ENCODE measurements at regions of chr19 and their contacts with region 1.

Region 1: DNA sequence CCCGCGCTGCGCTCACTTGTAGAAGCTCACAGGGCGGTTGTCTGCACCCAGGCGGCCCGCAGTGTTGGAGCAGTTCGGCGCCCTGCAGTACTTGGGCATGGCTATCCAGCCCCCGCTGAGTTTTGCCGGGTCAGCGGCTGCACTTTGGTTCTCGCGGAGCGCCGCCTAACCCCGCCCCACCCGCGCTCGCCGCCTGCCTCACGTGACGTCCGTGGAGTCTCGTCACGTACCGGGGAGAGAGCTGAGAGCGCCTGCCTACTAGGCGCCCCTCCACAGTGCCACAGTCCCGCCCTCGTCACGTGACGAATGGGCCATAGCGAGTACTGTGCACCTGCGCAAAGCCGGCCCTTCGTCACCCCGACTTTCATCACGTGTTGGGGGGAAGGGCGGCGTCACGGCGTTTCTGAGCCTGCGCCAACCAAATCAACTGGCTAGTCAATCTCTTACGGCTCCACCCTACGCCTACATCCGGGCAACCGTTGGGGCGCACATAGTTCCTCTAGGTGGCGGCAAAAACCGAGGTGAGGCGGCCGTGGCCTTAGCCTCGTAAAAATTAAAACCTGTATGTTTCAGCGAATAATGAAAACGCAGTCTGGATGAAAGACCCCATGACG is at the start of gene THAP8:
- DNase-seq: peak; percentile 100
- ATAC-seq: peak; percentile 96 to 98 (median 97)
- H3K4me3 ChIP-seq: peak within 1 kb of the TSS; percentile 43 to 75 (median 66)
- H3K27ac ChIP-seq: peak within 1 kb of the TSS; percentile 86 to 97 (median 92)
- H3K4me1 ChIP-seq: peaks cover 3 to 21% (median 16%) of the 10 kb centered on the region in 9 donors
- H3K27me3 ChIP-seq: no peaks in the 10 kb centered on the region
- CTCF ChIP-seq: peak in 8 of 9 donors; percentile 33 to 84 (median 56)
- total RNA-seq, gene THAP8: 2.7 to 7.7 (median 3.5) TPM

Region 2: DNA sequence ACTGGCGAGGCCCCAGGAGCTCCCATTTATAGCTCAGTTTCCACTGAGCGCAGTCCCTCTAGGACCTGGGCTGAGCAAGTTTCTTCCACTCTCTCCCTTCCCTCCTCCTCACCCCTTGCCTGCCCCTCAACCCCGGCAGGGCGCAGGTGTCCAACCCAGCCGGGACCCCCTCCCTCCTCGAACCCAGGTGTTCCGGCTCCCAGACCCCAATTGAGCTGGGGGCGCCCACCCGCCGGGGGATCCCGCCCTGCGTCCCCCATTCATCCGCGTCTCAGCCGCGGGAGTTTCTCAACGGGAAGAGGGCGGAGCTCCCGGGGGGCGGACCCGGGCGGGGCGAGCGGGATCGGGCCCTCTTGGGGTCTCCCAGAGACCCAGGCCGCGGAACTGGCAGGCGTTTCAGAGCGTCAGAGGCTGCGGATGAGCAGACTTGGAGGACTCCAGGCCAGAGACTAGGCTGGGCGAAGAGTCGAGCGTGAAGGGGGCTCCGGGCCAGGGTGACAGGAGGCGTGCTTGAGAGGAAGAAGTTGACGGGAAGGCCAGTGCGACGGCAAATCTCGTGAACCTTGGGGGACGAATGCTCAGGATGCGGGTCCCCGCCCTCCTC is 197.6 kb before region 1 on chr19 and contains the start of gene KIRREL2:
- intact Hi-C with region 1: no loop called
- DNase-seq: no peak
- ATAC-seq: peak in 5 of 8 donors; percentile 16 to 47 (median 34)
- H3K4me3 ChIP-seq: peak within 1 kb of the TSS; percentile 1 to 63 (median 52)
- H3K27ac ChIP-seq: no peak within 1 kb of the TSS
- H3K4me1 ChIP-seq: peaks cover 0 to 29% (median 12%) of the 10 kb centered on the region in 9 donors
- H3K27me3 ChIP-seq: peaks cover 20 to 98% (median 93%) of the 10 kb centered on the region in 7 donors
- CTCF ChIP-seq: no peak
- total RNA-seq, gene KIRREL2: 0.12 to 0.35 TPM in 2 of 10 donors, not detected in the others

Region 3: DNA sequence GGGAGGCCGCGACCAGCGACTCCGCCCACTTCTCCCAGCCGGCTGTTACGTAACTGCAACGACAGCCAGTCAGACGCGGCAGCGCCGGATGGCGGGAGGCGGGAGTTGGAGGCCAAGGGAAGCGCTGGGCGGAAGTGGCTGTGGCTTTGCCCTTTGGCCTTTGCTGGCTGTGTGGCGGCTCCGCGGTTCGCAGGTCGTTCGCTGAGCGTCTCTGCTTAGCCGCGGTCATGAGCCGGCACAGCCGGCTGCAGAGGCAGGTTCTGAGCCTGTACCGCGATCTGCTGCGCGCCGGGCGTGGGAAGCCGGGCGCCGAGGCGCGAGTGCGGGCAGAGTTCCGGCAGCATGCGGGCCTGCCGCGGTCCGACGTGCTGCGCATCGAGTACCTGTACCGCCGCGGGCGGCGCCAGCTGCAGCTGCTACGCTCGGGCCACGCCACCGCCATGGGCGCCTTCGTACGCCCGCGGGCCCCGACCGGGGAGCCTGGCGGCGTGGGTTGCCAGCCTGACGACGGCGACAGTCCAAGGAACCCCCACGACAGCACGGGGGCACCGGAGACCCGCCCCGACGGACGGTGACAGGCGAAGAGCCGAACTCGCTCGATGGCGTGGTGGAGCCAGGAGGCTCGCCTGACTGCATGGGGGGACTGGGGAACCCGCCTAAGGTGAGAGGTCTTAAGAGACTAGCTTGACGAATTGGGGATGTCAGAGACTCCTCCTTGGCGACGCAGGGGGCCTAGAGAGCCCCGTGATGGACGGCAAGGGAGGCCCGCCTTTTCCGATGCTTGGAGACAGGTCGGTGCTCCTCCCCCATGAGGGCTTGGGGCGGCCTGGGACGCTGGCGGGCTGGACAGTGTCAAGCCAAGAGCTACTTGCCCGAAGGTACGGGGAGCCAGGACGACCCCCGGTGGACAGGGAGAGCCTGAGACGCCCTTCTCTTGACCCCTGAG is 58.9 kb before region 1 on chr19 and contains the start of gene SDHAF1:
- intact Hi-C with region 1: loop called in 1 of 10 experiments (anchors 5 kb)
- DNase-seq: peak; percentile 97 to 98
- ATAC-seq: peak; percentile 95 to 97 (median 97)
- H3K4me3 ChIP-seq: peak within 1 kb of the TSS; percentile 75 to 99 (median 88)
- H3K27ac ChIP-seq: peak within 1 kb of the TSS in 9 of 10 donors; percentile 78 to 95 (median 88)
- H3K4me1 ChIP-seq: peaks cover 10 to 45% (median 26%) of the 10 kb centered on the region in 9 donors
- H3K27me3 ChIP-seq: no peaks in the 10 kb centered on the region
- CTCF ChIP-seq: no peak
- total RNA-seq, gene SDHAF1: 7.3 to 13.4 (median 10.2) TPM

Region 4: DNA sequence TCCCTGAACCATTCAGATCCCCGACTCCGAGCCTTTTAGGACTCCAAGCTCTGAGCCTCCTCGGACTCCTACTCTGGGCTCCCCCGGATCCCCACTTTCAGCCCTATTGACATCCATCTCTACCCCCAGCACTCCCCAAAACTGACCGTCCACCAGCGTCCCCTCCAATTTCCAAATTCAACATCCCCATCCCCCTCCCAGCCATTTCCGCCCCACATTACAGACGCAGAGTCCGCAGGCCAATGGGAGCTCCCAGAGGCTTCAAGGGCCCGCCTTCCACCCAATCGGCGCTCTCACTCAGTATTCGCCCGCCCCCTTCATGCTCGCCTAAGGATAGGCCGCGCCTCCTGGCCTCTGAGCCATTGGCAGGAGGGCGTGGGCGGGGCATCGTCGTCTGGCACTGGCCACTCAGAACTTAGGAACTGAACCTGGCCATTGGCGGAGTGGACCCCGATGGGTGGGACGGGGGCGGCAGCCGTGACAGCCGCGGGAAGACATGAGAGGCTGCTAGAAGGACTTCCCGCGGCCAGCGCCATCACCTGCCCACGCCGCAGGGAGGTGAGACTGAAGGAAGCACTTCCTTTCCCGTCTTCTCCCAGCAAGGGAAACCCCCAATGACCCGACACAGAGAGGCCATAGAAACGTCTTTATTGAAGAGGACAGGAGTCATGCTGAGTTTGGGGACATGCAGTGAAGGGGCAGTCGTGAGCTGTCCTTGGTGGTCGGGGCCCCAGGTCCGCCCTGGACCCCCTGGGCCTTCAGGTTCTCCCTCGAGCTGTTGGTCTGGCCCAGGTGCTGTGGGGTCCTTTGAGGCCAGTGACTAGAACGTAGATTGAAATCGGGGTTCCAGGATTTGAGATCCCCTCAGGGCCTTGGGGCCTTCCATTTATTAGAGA is 39.9 kb before region 1 on chr19 and contains the start of gene ALKBH6:
- intact Hi-C with region 1: loop called in 3 of 10 experiments (anchors 1 to 5 kb)
- DNase-seq: peak; percentile 99 to 100
- ATAC-seq: peak; percentile 98 to 100 (median 99)
- H3K4me3 ChIP-seq: peak within 1 kb of the TSS; percentile 34 to 92 (median 74)
- H3K27ac ChIP-seq: peak within 1 kb of the TSS in 9 of 10 donors; percentile 35 to 94 (median 82)
- H3K4me1 ChIP-seq: peaks cover 6 to 22% (median 12%) of the 10 kb centered on the region in 9 donors
- H3K27me3 ChIP-seq: no peaks in the 10 kb centered on the region
- CTCF ChIP-seq: peak in 2 of 9 donors; percentile 19 to 23
- total RNA-seq, gene ALKBH6: 7.9 to 12.4 (median 10.2) TPM

Region 5: GRCh38 chr19:36028313-36029041 is 25.7 kb before region 1 on chr19:
- intact Hi-C with region 1: no loop called
- DNase-seq: no peak
- ATAC-seq: no peak
- H3K4me3 ChIP-seq: no peak overlapping the region
- H3K27ac ChIP-seq: no peak overlapping the region
- H3K4me1 ChIP-seq: peaks cover 0 to 16% (median 10%) of the 10 kb centered on the region in 9 donors
- H3K27me3 ChIP-seq: peaks cover 0 to 11% (median 0%) of the 10 kb centered on the region in 7 donors
- CTCF ChIP-seq: no peak

Region 6: GRCh38 chr19:36097036-36097435 is 42.8 kb after region 1 on chr19:
- intact Hi-C with region 1: loop called in 1 of 10 experiments (anchors 5 kb)
- DNase-seq: no peak
- ATAC-seq: no peak
- H3K4me3 ChIP-seq: no peak overlapping the region
- H3K27ac ChIP-seq: peak overlapping the region in 7 of 10 donors; percentile 9 to 63 (median 39)
- H3K4me1 ChIP-seq: peaks cover 0 to 40% (median 24%) of the 10 kb centered on the region in 9 donors
- H3K27me3 ChIP-seq: no peaks in the 10 kb centered on the region
- CTCF ChIP-seq: no peak

Region 7: GRCh38 chr19:36114763-36115452 is 60.7 kb after region 1 on chr19 and contains the start of gene POLR2I:
- intact Hi-C with region 1: loop called in 5 of 10 experiments (anchors 1 to 10 kb)
- DNase-seq: peak; percentile 98 to 100
- ATAC-seq: peak; percentile 93 to 98 (median 96)
- H3K4me3 ChIP-seq: peak within 1 kb of the TSS; percentile 71 to 90 (median 78)
- H3K27ac ChIP-seq: peak within 1 kb of the TSS; percentile 41 to 93 (median 89)
- H3K4me1 ChIP-seq: peaks cover 7 to 30% (median 24%) of the 10 kb centered on the region in 9 donors
- H3K27me3 ChIP-seq: no peaks in the 10 kb centered on the region
- CTCF ChIP-seq: no peak
- total RNA-seq, gene POLR2I: 83.7 to 139 (median 105) TPM

Region 8: DNA sequence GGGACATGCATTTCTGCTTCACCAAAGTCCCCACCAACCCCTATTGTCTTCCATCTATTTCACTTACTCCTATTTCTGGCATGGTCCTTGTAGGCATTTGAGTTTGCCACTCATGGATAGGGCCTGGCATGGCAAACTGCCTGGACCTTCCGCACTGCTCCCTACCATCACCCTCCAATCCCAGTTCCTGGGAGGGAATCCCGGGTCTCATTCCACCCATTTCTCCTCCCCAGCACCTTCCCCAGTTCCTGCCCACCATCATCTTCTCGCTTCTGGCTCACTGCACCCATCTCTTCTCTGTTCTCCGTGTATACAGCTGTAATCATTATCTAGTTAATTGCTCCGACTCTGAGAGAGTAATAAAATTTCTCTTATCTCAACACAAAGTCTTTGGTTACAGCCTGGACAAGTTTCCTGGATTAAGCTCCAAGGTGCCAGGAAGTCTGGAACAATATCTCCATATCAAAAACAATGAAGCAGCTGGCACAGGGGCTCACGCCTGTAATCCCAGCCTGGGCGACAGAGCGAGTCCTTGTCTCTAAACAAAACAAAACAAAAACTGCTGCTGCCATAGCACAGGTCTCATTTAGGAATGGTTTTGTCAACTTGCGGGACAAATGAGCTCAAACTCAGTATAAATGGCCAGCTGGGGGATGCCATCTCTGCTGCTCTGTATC is 115.0 kb after region 1 on chr19:
- intact Hi-C with region 1: loop called in 2 of 10 experiments (anchors 5 kb)
- DNase-seq: peak; percentile 18 to 37
- ATAC-seq: peak; percentile 41 to 79 (median 57)
- H3K4me3 ChIP-seq: peak overlapping the region in 1 of 10 donors; percentile 1
- H3K27ac ChIP-seq: peak overlapping the region; percentile 60 to 89 (median 74)
- H3K4me1 ChIP-seq: peaks cover 0 to 28% (median 19%) of the 10 kb centered on the region in 9 donors
- H3K27me3 ChIP-seq: no peaks in the 10 kb centered on the region
- CTCF ChIP-seq: no peak

Region 9: GRCh38 chr19:36214386-36215275 is 160.4 kb after region 1 on chr19 and contains the starts of genes ZNF146 and ZNF565:
- intact Hi-C with region 1: loop called in 1 of 10 experiments (anchors 1 kb)
- DNase-seq: peak; percentile 98
- ATAC-seq: peak; percentile 96 to 98 (median 97)
- H3K4me3 ChIP-seq: peak within 1 kb of the TSS; percentile 58 to 85 (median 76)
- H3K27ac ChIP-seq: peak within 1 kb of the TSS; percentile 88 to 96 (median 92)
- H3K4me1 ChIP-seq: peaks cover 0 to 44% (median 18%) of the 10 kb centered on the region in 9 donors
- H3K27me3 ChIP-seq: no peaks in the 10 kb centered on the region
- CTCF ChIP-seq: peak in 1 of 9 donors; percentile 8
- total RNA-seq, gene ZNF146: 25.7 to 42.1 (median 32.6) TPM
- total RNA-seq, gene ZNF565: 2.6 to 5.1 (median 3.6) TPM